Activated B cell treated with CpG ODN at 0.5 μM for 24 hours (primary cell): ENCODE measurements at regions of chr5 and their contacts with region 1.

Region 1: GRCh38 chr5:134411546-134412266 is at the start of gene CDKN2AIPNL:
- DNase-seq: peak; percentile 92
- ATAC-seq: peak; percentile 99
- H3K4me3 Mint-ChIP-seq: peak within 1 kb of the TSS; percentile 95
- H3K27ac Mint-ChIP-seq: peak within 1 kb of the TSS; percentile 85
- H3K4me1 Mint-ChIP-seq: peaks cover 31% of the 10 kb centered on the region
- H3K27me3 Mint-ChIP-seq: no peaks in the 10 kb centered on the region
- CTCF ChIP-seq: no peak
- total RNA-seq, gene CDKN2AIPNL: 21.6 and 22.4 TPM in 2 replicates

Region 2: DNA sequence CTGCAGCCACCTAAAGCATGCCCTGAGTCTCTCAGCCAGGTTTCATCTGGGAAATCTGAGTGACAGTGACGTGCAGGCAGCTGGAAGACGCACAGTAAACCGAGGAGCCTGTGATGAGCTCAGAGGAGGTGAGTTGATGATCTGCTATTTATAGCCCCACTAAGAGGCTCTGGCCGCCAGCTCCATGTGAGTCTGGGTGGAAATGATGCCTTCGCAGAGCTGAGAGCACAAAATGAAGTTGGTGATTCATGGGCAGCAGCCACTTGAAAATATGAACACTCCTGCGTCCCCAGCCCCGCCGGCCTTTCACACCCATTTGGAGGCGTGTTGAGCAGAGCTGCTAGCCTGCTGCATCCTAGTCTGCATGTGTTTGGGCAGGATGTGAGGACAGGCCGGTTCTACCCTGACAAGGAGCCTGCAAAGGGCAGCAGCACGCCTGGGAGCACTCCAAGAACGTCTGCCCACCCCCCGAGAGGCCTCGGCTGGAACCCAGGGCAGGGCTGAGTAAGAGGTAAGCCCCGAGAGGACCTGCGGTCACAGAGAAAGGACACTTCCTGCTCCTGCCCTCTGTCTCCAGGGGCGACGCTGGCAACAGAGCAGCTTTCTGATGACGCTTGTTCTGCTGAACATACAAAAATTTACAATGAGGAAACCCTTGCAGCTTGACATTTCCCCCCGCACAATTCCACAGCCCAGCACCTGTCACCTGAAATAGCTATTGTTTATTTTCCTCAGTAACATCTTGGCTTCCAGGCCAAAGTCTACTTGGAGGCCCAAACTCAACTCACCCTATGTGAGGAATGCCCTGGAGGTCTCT is 25.0 kb after region 1 on chr5:
- CTCF ChIA-PET with region 1: interaction called, 5 read pairs
- POLR2A ChIA-PET with region 1: interaction called, 9 read pairs
- intact Hi-C with region 1: loop called (anchors 1 kb)
- DNase-seq: peak; percentile 64
- ATAC-seq: peak; percentile 95
- H3K4me3 Mint-ChIP-seq: peak overlapping the region; percentile 56
- H3K27ac Mint-ChIP-seq: peak overlapping the region; percentile 68
- H3K4me1 Mint-ChIP-seq: peaks cover 25% of the 10 kb centered on the region
- H3K27me3 Mint-ChIP-seq: no peaks in the 10 kb centered on the region
- CTCF ChIP-seq: no peak

Region 3: GRCh38 chr5:134465816-134466240 is 54.1 kb after region 1 on chr5:
- CTCF ChIA-PET with region 1: interaction called, 4 read pairs
- POLR2A ChIA-PET with region 1: interaction called, 10 read pairs
- intact Hi-C with region 1: loop called (anchors 1 kb)
- DNase-seq: peak; percentile 68
- ATAC-seq: peak; percentile 82
- H3K4me3 Mint-ChIP-seq: peak overlapping the region; percentile 79
- H3K27ac Mint-ChIP-seq: peak overlapping the region; percentile 66
- H3K4me1 Mint-ChIP-seq: peaks cover 43% of the 10 kb centered on the region
- H3K27me3 Mint-ChIP-seq: no peaks in the 10 kb centered on the region
- CTCF ChIP-seq: no peak

Region 4: DNA sequence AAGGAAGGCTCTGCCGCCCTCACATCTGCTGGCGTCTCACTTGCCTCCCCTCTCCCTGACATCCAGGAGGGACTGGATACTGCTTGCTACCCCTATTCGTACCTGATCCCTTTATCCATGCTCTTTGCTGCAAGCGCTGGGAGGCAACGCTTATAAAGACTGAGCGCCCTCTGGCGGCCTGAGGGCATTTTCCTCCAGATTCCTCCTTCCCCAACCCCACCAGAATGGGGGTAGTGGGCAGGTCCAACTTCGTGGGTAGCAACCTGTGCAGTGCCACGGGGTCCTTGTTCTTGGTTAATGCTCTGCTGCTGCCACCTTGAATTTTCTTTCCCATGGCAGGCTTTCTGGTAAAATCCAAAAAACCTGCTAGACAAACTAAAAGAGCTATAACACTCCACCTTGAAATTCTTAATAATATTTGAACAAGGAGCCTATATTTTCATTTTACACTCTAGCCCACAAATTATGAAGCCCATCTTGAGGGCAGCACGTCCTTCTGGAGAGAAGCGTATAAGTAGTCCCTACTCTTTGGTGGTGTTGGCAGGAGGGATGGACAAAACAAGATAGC is 166.2 kb after region 1 on chr5:
- CTCF ChIA-PET with region 1: interaction called, 26 read pairs
- POLR2A ChIA-PET with region 1: interaction called, 6 read pairs
- intact Hi-C with region 1: loop called (anchors 1 kb)
- DNase-seq: peak; percentile 72
- ATAC-seq: peak; percentile 72
- H3K4me3 Mint-ChIP-seq: no peak overlapping the region
- H3K27ac Mint-ChIP-seq: peak overlapping the region; percentile 27
- H3K4me1 Mint-ChIP-seq: peaks cover 17% of the 10 kb centered on the region
- H3K27me3 Mint-ChIP-seq: no peaks in the 10 kb centered on the region
- CTCF ChIP-seq: peak; percentile 55